ENCODE measurements at regions of chr10 and their contacts with region 1.

Region 1: GRCh38 chr10:47047671-47048525 is 136.7 kb downstream of the PTPN20 start:
- DNase-seq: peak; percentile 87
- H3K4me3 Mint-ChIP-seq: no peak overlapping the region
- H3K27ac Mint-ChIP-seq: no peak overlapping the region
- H3K4me1 Mint-ChIP-seq: peaks cover 16% of the 10 kb centered on the region
- H3K27me3 Mint-ChIP-seq: no peaks in the 10 kb centered on the region

Region 2: DNA sequence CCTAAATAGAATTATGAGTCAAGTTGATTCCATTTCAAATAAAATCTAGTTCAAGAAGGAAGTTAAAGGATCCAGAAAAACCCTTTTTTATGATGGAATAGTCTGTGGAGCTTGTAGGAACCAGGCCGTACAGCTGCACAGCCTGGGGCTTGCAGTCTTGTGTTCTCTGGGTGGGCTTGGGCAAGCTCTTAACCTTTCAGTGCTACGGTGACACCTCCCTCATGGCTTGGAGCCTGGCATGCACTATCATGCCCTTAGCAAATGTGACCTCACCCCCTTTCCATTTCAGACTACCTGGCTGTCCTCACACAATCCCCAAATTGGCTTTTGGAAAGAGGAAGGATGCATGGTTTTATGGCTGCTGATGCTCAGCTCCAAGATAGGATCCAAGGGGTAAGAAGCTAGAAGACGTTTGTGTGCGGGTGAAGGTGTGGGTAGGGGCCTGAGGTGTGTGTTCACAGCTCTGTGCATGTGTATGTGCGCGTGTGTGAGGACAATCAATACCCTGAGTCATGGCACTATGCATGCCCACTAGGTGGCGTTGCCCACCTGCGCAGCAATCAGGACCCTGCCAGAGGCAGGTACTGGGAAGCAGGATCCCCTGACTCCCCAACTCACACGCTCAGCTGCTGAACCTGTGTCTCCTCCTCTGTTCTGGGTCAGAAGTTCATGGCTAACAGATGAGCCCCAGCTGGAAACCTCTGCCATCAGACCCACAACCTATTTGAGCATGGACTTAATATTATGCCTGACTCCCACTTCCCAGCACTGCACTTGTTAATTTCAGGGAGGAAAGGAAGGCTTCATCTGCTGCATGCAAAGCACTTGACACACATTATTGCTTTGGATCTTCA is 23.3 kb before region 1 on chr10:
- CTCF ChIA-PET with region 1: interaction called, 36 read pairs
- intact Hi-C with region 1: loop called (anchors 1 kb)
- DNase-seq: peak; percentile 84
- H3K4me3 Mint-ChIP-seq: no peak overlapping the region
- H3K27ac Mint-ChIP-seq: no peak overlapping the region
- H3K4me1 Mint-ChIP-seq: no peaks in the 10 kb centered on the region
- H3K27me3 Mint-ChIP-seq: no peaks in the 10 kb centered on the region

Region 3: GRCh38 chr10:47152861-47153349 is 105.0 kb after region 1 on chr10:
- CTCF ChIA-PET with region 1: interaction called, 4 read pairs
- intact Hi-C with region 1: loop called (anchors 5 kb)
- DNase-seq: peak; percentile 14
- H3K4me3 Mint-ChIP-seq: no peak overlapping the region
- H3K27ac Mint-ChIP-seq: no peak overlapping the region
- H3K4me1 Mint-ChIP-seq: peaks cover 10% of the 10 kb centered on the region
- H3K27me3 Mint-ChIP-seq: no peaks in the 10 kb centered on the region

Region 4: DNA sequence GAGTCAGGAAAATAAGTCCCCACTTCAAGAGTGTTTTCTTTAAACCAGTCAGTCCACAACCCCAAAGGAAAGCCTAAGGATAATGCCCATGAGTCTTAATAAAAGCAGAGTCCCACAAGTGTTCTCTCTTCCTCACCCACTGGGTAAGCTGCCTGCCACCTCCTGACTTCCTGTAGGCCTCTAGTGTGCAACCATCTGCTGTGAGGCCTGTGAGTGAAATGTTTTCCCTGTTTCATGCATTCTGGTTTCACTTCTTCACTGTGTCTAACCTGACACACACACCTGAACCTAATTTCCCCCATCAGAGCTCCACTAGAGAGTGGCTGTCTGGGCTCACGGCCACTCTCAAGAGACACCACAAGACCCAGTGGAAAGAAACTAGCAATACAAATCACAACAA is 213.2 kb after region 1 on chr10:
- CTCF ChIA-PET with region 1: interaction called, 9 read pairs
- intact Hi-C with region 1: loop called (anchors 2 kb)
- DNase-seq: peak; percentile 71
- H3K4me3 Mint-ChIP-seq: peak overlapping the region; percentile 41
- H3K27ac Mint-ChIP-seq: peak overlapping the region; percentile 98
- H3K4me1 Mint-ChIP-seq: peaks cover 94% of the 10 kb centered on the region
- H3K27me3 Mint-ChIP-seq: no peaks in the 10 kb centered on the region

Region 5: GRCh38 chr10:47311932-47312662 is 264.2 kb after region 1 on chr10:
- CTCF ChIA-PET with region 1: interaction called, 185 read pairs
- intact Hi-C with region 1: loop called (anchors 1 kb)
- DNase-seq: peak; percentile 93
- H3K4me3 Mint-ChIP-seq: no peak overlapping the region
- H3K27ac Mint-ChIP-seq: peak overlapping the region; percentile 41
- H3K4me1 Mint-ChIP-seq: peaks cover 32% of the 10 kb centered on the region
- H3K27me3 Mint-ChIP-seq: no peaks in the 10 kb centered on the region

Measured in activated naive CD4-positive, alpha-beta T cell treated with anti-CD3 and anti-CD28 coated beads for 36 hours (primary cell).